ENCODE measurements at regions of chr9 and their contacts with region 1.

Region 1: GRCh38 chr9:76658535-76659231 is 105.6 kb upstream of the PCA3 start:
- DNase-seq: peak; percentile 24
- H3K4me3 ChIP-seq: no peak overlapping the region
- CTCF ChIP-seq: peak; percentile 57

Region 2: GRCh38 chr9:76403352-76403751 is 255.3 kb before region 1 on chr9:
- CTCF ChIA-PET with region 1: interaction called, 19 read pairs
- POLR2A ChIA-PET with region 1: no interaction called
- DNase-seq: peak; percentile 64
- H3K4me3 ChIP-seq: no peak overlapping the region
- CTCF ChIP-seq: peak; percentile 43

Region 3: GRCh38 chr9:76451234-76451633 is 207.4 kb before region 1 on chr9:
- CTCF ChIA-PET with region 1: interaction called, 330 read pairs
- POLR2A ChIA-PET with region 1: no interaction called
- DNase-seq: no peak
- H3K4me3 ChIP-seq: no peak overlapping the region
- CTCF ChIP-seq: no peak

Region 4: GRCh38 chr9:76691517-76692313 is 33.0 kb after region 1 on chr9:
- CTCF ChIA-PET with region 1: interaction called, 11 read pairs
- POLR2A ChIA-PET with region 1: interaction called, 3 read pairs
- DNase-seq: no peak
- H3K4me3 ChIP-seq: peak overlapping the region; percentile 29; the same call in 1 of the 2 replicates
- CTCF ChIP-seq: no peak

Measured in AG04449 (cell line).